H1 (cell line): ENCODE measurements at regions of chr19 and their contacts with region 1.

Region 1: GRCh38 chr19:42563352-42564210 is 31.1 kb downstream of the CEACAM8 start:
- DNase-seq: no peak
- H3K4me3 ChIP-seq: no peak overlapping the region
- H3K27ac ChIP-seq: no peak overlapping the region
- H3K4me1 ChIP-seq: peaks cover 2 to 8% (median 3%) of the 10 kb centered on the region in 4 experiments; a peak in 6 of 7 replicates
- H3K27me3 ChIP-seq: no peaks in the 10 kb centered on the region
- CTCF ChIP-seq: peak in 2 of 3 experiments; percentile 74 to 84; a peak in 3 of 4 replicates
- EP300 ChIP-seq: no peak
- POLR2A ChIP-seq: no peak
- RAD21 ChIP-seq: peak; percentile 72 to 75

Region 2: GRCh38 chr19:42295831-42296525 is 267.6 kb before region 1 on chr19:
- CTCF ChIA-PET with region 1: no interaction called
- POLR2A ChIA-PET with region 1: no interaction called
- DNase-seq: peak; percentile 65 to 100
- H3K4me3 ChIP-seq: no peak overlapping the region
- H3K27ac ChIP-seq: no peak overlapping the region
- H3K4me1 ChIP-seq: peaks cover 0 to 2% (median under 1%) of the 10 kb centered on the region in 4 experiments; a peak in 1 of 7 replicates
- H3K27me3 ChIP-seq: no peaks in the 10 kb centered on the region
- CTCF ChIP-seq: peak; percentile 87 to 100 (median 98)
- EP300 ChIP-seq: no peak
- POLR2A ChIP-seq: peak in 1 of 2 experiments; percentile 18; a peak in 1 of 3 replicates
- RAD21 ChIP-seq: peak; percentile 67 to 76

Region 3: DNA sequence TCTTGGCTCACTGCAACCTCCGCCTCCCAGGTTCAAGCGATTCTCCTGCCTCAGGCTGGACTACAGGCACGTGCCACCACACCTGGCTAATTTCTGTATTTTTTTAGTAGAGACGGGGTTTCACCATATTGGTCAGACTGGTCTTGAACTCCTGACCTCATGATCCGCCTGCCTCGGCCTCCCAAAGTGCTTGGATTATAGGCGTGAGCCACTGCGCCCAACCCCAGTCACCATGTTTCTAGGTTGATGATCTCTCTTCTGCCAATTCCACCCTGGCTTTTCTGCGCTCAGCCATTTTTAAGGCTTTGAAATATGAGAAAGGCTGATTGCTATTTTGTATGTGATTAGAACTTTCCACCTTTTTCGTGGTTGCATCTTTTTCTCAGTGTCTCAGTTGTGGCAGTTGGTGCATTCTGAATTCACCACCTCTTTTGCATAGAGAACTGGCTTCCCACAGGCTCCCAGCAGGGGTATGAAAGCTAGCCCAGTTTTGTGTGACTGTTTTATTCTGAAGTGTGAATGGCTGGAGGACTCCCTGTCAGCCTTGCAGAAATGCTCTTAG is 50.8 kb before region 1 on chr19:
- CTCF ChIA-PET with region 1: no interaction called
- POLR2A ChIA-PET with region 1: no interaction called
- DNase-seq: peak in 1 of 2 experiments; percentile 48
- H3K4me3 ChIP-seq: no peak overlapping the region
- H3K27ac ChIP-seq: no peak overlapping the region
- H3K4me1 ChIP-seq: peaks cover 0 to 5% (median 2%) of the 10 kb centered on the region in 4 experiments; a peak in 2 of 7 replicates
- H3K27me3 ChIP-seq: no peaks in the 10 kb centered on the region; a peak in 1 of 7 replicates
- CTCF ChIP-seq: no peak
- EP300 ChIP-seq: no peak
- POLR2A ChIP-seq: no peak
- RAD21 ChIP-seq: no peak

Region 4: DNA sequence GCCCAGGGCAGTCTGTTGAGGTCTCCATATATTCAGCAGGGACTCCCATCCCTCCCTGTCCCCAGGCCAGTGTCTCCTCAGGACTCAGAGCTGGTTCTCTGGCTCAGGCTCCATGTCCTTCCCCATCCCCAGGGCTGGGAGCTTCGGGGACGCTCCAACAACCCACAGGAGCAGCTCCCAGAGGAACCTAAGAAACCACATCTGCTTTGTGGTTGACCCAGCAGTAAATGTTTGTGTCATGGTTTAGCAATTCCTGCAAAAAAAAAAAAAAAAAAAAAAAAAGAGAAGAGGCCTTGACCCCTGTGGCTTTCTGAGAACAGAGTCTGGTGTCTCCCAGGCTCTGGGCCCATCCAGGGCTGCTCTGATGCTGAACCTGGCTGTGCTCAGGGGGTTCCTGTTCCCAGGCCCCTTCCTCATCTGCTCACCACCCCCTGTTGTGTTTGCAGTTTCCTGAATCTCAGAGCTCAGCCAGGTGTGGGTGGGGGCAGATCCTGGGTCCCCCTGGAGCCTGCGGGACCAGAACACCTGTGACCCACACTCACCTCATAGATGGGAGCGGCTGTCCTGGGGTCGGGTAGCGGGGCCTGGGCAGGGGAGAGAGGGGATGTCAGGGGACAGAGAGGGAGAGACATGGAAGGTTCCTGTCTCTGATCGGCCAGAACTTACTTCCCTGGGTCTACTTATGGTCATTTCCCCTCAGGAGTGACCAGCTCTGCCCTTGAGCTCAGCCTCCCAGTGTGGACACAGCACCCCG is 10.1 kb before region 1 on chr19:
- CTCF ChIA-PET with region 1: interaction called, 30 read pairs
- POLR2A ChIA-PET with region 1: no interaction called
- DNase-seq: no peak
- H3K4me3 ChIP-seq: no peak overlapping the region
- H3K27ac ChIP-seq: no peak overlapping the region
- H3K4me1 ChIP-seq: peaks cover 1 to 12% (median 8%) of the 10 kb centered on the region in 4 experiments
- H3K27me3 ChIP-seq: no peaks in the 10 kb centered on the region; a peak in 2 of 7 replicates
- CTCF ChIP-seq: no peak
- EP300 ChIP-seq: no peak
- POLR2A ChIP-seq: no peak
- RAD21 ChIP-seq: no peak

Region 5: DNA sequence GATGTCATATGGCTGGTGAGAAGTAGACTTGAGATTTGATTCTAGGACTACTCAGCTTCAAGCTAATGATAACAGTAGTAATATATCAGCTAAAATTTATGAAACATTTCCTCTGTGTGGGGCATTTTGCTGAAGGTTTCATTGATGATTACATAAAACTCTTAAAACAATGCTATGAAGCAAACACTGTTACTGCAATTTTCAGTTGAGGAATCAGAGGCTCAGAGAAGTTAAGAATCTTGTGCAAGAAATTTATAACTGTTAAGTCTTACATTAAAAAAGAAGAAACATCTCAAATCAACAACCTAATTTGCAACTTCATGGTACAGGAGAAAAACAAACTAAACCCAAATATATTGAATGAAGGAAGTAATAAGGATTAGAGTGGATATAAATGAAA is 20.9 kb after region 1 on chr19:
- CTCF ChIA-PET with region 1: interaction called, 14 read pairs
- POLR2A ChIA-PET with region 1: no interaction called
- DNase-seq: no peak
- H3K4me3 ChIP-seq: no peak overlapping the region
- H3K27ac ChIP-seq: no peak overlapping the region
- H3K4me1 ChIP-seq: no peaks in the 10 kb centered on the region
- H3K27me3 ChIP-seq: no peaks in the 10 kb centered on the region
- CTCF ChIP-seq: no peak
- EP300 ChIP-seq: no peak
- POLR2A ChIP-seq: no peak
- RAD21 ChIP-seq: no peak